HepG2 (cell line): ENCODE measurements at regions of chr17 and their contacts with region 1.

Region 1: DNA sequence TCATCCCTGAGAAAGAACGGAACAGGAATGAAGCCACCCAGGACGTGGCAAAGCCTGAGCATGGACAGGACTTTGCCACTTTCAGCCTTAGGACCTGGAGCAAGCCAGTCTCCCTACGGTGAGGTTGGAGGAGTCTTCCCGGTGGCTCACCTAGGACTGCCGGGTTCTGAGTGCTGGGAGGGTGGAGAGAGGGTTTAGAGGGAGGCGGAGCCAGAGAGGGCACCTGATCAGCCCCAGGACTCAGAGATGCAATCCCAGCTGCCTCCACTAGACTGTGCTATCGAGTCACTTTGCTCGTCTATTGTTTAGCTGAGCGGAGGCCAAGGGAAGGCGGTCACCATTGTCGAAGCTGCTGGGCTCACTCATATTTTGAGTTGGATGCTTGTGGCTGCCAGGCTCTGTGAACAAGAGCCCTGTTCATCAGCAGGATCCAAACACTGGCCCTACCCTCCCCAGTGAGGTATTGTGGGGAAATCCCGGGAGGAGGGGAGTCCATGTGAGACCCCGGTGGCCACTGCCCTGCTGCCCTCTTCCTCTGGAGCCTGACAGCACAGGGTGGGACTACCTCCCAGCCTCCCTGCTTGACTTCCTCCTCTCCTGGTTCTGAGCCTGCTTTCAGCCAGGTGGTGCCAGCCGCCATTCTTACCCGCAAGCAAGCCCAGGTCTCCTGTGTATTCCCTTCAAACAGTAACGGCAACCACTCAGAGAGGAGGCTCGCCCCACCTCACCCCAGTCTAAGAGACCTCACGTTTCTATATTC is 7.0 kb downstream of the KRT14 start:
- DNase-seq: peak; percentile 85
- ATAC-seq: peak; percentile 89
- H3K4me3 ChIP-seq: no peak overlapping the region
- H3K27ac ChIP-seq: no peak overlapping the region
- H3K4me1 ChIP-seq: no peaks in the 10 kb centered on the region
- H3K27me3 ChIP-seq: peaks cover 0 to 4% of the 10 kb centered on the region in 2 experiments; a peak in 2 of 5 replicates
- CTCF ChIP-seq: peak; percentile 90
- EP300 ChIP-seq: no peak
- POLR2A ChIP-seq: no peak
- RAD21 ChIP-seq: peak; percentile 59

Region 2: DNA sequence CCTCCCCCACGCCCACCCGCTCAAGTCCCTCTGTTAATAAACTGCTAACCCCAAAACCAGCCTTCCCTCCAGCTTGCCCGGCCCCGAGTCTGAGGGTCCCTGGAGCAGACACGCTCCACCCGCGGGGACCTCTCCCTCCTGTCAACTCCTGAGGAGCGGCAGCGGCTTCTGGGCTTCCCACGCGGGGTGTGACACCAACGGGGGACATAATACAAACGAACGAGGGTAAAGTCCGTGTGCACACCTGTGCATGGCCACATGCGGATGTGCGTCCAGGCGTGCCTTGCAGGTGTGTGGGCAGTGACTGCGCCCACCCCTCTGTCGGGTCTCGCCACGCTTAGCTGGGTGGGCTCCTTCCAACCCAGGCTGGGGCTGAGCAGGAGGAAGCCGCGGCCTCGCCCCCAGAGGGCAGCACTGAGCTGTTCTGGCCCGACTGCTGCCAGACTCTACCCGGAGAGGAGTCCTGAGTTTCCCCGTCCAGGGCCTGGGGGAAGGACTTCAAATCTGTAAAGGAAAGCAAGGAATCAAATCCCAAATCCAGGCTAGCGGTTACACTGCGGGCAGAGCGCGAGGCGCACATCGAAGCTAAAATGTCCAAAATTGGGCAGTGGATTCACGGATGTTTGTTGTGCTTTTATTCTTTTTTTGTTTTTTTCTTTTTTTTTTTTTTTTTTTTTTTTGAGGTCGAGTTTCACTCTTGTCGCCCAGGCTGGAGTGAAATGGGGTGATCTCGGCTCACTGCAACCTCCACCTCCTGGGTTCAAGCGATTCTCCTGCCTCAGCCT is 68.9 kb after region 1 on chr17:
- CTCF ChIA-PET with region 1: interaction called, 6 read pairs
- POLR2A ChIA-PET with region 1: no interaction called
- in situ Hi-C with region 1: no loop called
- intact Hi-C with region 1: loop called (anchors 10 kb)
- DNase-seq: peak; percentile 75
- ATAC-seq: peak; percentile 89
- H3K4me3 ChIP-seq: peak overlapping the region; percentile 4 to 66 (median 37); a peak in 3 of 6 replicates
- H3K27ac ChIP-seq: no peak overlapping the region
- H3K4me1 ChIP-seq: peaks cover 33% of the 10 kb centered on the region
- H3K27me3 ChIP-seq: peaks cover 5 to 20% of the 10 kb centered on the region in 2 experiments; a peak in 3 of 5 replicates
- CTCF ChIP-seq: peak; percentile 98
- EP300 ChIP-seq: no peak
- POLR2A ChIP-seq: no peak
- RAD21 ChIP-seq: peak; percentile 83